Activated naive CD4-positive, alpha-beta T cell treated with anti-CD3 and anti-CD28 coated beads for 36 hours (primary cell): ENCODE measurements at regions of chr10 and their contacts with region 1.

Region 1: GRCh38 chr10:72308320-72308987 is 34.7 kb downstream of the DDIT4 start:
- DNase-seq: peak; percentile 73
- H3K4me3 Mint-ChIP-seq: no peak overlapping the region
- H3K27ac Mint-ChIP-seq: peak overlapping the region; percentile 87
- H3K4me1 Mint-ChIP-seq: peaks cover 74% of the 10 kb centered on the region
- H3K27me3 Mint-ChIP-seq: no peaks in the 10 kb centered on the region

Region 2: GRCh38 chr10:72319416-72320254 is 11.2 kb after region 1 on chr10:
- CTCF ChIA-PET with region 1: interaction called, 13 read pairs
- intact Hi-C with region 1: loop called (anchors 1 kb)
- DNase-seq: peak; percentile 94
- H3K4me3 Mint-ChIP-seq: peak overlapping the region; percentile 86
- H3K27ac Mint-ChIP-seq: peak overlapping the region; percentile 99
- H3K4me1 Mint-ChIP-seq: peaks cover 79% of the 10 kb centered on the region
- H3K27me3 Mint-ChIP-seq: no peaks in the 10 kb centered on the region

Region 3: DNA sequence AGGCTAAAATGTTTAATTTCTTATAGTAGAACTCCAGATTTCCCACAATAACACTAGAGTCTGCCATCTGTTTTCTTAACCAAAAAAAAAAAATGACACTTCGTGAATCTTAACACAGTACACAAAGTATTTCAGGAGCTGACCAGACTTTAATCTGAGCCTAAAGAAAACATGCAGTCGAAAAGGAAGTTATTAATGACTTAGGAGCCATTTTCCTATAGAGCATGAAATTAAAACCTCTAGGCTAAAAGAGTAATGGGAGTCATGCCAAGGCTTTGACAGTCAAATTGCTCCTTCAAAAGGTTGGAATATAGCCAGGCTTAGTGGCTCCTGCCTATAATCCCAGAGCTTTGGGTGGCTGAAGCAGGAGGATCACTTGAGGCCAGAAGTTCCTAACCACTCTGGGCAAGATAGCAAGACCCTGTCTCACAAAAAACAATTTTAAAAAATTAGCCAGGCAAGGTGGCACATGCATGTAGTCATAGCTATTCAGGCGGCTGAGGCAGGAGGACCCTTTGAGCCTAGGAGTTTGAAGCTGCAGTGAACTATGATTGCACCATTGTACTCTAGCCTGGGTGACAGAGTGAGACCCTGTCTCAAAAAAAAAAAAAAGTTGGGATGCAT is 303.9 kb after region 1 on chr10:
- CTCF ChIA-PET with region 1: no interaction called
- intact Hi-C with region 1: no loop called
- DNase-seq: no peak
- H3K4me3 Mint-ChIP-seq: no peak overlapping the region
- H3K27ac Mint-ChIP-seq: no peak overlapping the region
- H3K4me1 Mint-ChIP-seq: peaks cover 22% of the 10 kb centered on the region
- H3K27me3 Mint-ChIP-seq: no peaks in the 10 kb centered on the region